ENCODE measurements at regions of chr2 and their contacts with region 1.

Region 1: GRCh38 chr2:74573747-74574562 is 19.4 kb downstream of the DOK1 start:
- DNase-seq: peak; percentile 69
- ATAC-seq: peak; percentile 69
- H3K4me3 ChIP-seq: peak overlapping the region in 4 of 5 experiments; percentile 21 to 34 (median 32)
- H3K4me3 Mint-ChIP-seq: peak overlapping the region; percentile 84
- H3K27ac ChIP-seq: peak overlapping the region; percentile 9 to 74
- H3K27ac Mint-ChIP-seq: peak overlapping the region; percentile 92
- H3K4me1 ChIP-seq: peaks cover 58 to 68% of the 10 kb centered on the region in 2 donors
- H3K4me1 Mint-ChIP-seq: peaks cover 46% of the 10 kb centered on the region
- H3K27me3 ChIP-seq: no peaks in the 10 kb centered on the region
- H3K27me3 Mint-ChIP-seq: no peaks in the 10 kb centered on the region
- CTCF ChIP-seq: no peak

Region 2: GRCh38 chr2:74597410-74597809 is 23.5 kb after region 1 on chr2:
- CTCF ChIA-PET with region 1: no interaction called
- POLR2A ChIA-PET with region 1: no interaction called
- intact Hi-C with region 1: loop called (anchors 2 kb)
- DNase-seq: no peak
- ATAC-seq: no peak
- H3K4me3 ChIP-seq: no peak overlapping the region
- H3K4me3 Mint-ChIP-seq: no peak overlapping the region
- H3K27ac ChIP-seq: no peak overlapping the region
- H3K27ac Mint-ChIP-seq: no peak overlapping the region
- H3K4me1 ChIP-seq: peaks cover 3 to 5% of the 10 kb centered on the region in 2 donors
- H3K4me1 Mint-ChIP-seq: peaks cover 5% of the 10 kb centered on the region
- H3K27me3 ChIP-seq: peaks cover 0 to 14% (median 9%) of the 10 kb centered on the region in 4 experiments
- H3K27me3 Mint-ChIP-seq: peaks cover 17% of the 10 kb centered on the region
- CTCF ChIP-seq: no peak

Measured in B cell (primary cell).